ENCODE measurements at regions of chr6 and their contacts with region 1.

Region 1: DNA sequence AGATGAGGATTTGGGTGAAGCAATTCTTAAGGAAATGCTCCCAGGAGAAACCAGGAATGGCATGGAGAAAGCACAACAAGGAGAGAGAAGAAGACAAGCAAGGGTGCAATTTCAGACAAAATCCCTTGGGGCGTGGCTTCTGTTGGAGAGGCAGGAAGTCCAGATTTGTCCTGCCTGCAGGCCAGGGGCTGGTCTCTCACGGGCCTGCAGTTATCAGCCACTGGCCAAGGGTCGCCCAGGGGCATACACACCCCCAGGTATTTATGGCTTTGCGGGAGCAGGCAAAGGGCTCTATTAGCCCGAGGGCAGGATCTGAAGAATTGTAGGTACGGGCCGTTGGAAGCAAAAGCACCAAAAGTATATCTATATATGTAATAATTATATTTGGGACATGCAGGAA is 87.6 kb downstream of the IYD start:
- DNase-seq: no peak
- ATAC-seq: no peak
- H3K4me3 ChIP-seq: no peak overlapping the region
- H3K27ac ChIP-seq: no peak overlapping the region
- H3K4me1 ChIP-seq: no peaks in the 10 kb centered on the region
- H3K27me3 ChIP-seq: no peaks in the 10 kb centered on the region; a peak in 2 of 5 replicates
- CTCF ChIP-seq: no peak
- EP300 ChIP-seq: no peak
- POLR2A ChIP-seq: no peak
- RAD21 ChIP-seq: no peak

Region 2: DNA sequence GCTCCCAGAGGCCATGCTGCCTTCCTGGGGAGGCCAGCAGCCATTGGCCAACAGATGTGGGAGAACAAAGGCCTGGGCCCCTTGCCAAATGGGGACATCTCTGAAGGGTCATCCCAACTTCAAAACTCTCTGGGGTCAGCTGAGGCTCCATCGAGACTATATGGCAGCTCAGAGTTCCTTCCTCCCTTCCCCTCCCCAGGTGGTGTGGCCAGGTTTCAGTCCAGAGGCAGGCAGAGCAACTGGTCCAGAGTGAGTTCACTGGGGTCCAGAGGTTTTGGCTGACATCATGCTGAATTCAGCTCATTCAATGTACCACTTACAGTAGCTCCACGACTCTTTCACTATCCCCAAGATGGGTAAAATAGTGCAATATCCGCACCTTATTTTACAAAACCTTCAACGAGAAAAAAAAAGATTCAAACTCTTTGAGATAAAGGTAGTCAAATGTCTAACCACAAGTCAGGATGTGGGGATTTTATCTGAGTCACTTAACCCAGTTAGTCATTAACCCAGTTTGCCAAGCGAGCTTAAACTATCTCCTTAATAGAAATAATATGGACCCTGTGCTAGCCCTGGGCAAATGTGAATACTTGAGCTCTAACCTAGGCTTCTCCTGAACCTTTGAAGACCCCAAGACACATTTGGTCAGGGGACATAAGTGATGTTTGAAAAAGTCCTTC is 34.8 kb after region 1 on chr6:
- CTCF ChIA-PET with region 1: no interaction called
- POLR2A ChIA-PET with region 1: no interaction called
- in situ Hi-C with region 1: no loop called
- intact Hi-C with region 1: loop called (anchors 5 kb)
- DNase-seq: no peak
- ATAC-seq: no peak
- H3K4me3 ChIP-seq: no peak overlapping the region
- H3K27ac ChIP-seq: no peak overlapping the region
- H3K4me1 ChIP-seq: no peaks in the 10 kb centered on the region
- H3K27me3 ChIP-seq: no peaks in the 10 kb centered on the region
- CTCF ChIP-seq: no peak
- EP300 ChIP-seq: no peak
- POLR2A ChIP-seq: no peak
- RAD21 ChIP-seq: no peak

Region 3: DNA sequence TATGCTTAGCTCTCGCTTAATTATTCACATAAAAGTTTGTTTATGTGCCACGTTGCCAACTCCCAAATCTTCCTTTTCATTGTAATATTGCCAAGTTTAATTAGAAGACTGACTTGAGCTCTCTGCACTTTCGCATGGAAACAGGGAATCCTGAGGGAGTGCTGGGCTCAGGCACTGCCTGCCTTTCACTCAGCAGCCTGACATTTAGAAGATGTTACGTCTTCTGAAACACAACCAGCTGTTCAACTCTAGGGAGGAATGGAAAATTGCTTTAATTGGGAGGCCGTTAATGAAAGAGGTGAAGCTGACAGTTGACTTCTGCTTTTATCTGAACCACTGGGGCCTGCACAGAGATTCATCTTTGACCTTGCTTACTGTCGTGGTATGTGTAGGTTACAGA is 331.6 kb after region 1 on chr6:
- CTCF ChIA-PET with region 1: no interaction called
- POLR2A ChIA-PET with region 1: no interaction called
- in situ Hi-C with region 1: no loop called
- intact Hi-C with region 1: no loop called
- DNase-seq: no peak
- ATAC-seq: no peak
- H3K4me3 ChIP-seq: no peak overlapping the region
- H3K27ac ChIP-seq: no peak overlapping the region
- H3K4me1 ChIP-seq: no peaks in the 10 kb centered on the region
- H3K27me3 ChIP-seq: no peaks in the 10 kb centered on the region
- CTCF ChIP-seq: no peak
- EP300 ChIP-seq: no peak
- POLR2A ChIP-seq: no peak
- RAD21 ChIP-seq: no peak

Measured in HepG2 (cell line).